Activated CD4-positive, alpha-beta T cell treated with anti-CD3 and anti-CD28 coated beads, Interleukin-2, amount 10 ng/mL, durations not matched to agents 7 days and 5 days (primary cell): ENCODE measurements at regions of chr2 and their contacts with region 1.

Region 1: DNA sequence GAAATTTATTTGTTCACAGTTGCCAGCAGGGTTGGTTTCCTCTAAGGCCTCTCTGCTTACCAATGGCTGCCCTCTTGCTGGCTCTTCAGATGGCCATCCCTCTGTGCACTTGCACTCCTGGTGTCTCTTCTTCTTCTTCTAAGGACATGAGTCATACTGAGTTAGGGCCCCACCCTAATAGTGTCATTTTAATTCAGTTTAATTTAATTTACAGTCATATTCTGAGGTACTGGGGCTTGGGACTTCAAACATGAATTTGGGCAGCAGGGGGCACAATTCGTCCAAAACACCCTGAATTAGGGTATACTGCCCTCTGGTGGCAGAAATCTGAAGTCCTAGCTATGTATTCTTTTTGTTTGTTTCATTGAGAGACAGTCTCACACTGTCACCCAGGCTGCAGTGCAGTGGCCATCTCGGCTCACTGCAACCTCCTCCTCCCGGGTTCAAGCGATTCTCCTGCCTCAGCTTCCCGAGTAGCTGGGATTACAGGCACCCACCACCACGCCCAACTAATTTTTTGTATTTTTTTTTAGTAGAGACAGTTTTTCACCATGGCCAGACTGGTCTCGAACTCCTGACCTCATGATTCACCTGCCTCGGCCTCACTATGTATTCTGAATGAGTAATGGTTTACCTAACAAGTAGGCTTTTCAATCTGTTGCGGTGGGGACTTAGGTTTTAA is 19.8 kb downstream of the SLC4A1AP start:
- DNase-seq: peak; percentile 96
- H3K4me3 Mint-ChIP-seq: no peak overlapping the region
- H3K27ac Mint-ChIP-seq: peak overlapping the region; percentile 82
- H3K4me1 Mint-ChIP-seq: peaks cover 26% of the 10 kb centered on the region
- H3K27me3 Mint-ChIP-seq: no peaks in the 10 kb centered on the region

Region 2: DNA sequence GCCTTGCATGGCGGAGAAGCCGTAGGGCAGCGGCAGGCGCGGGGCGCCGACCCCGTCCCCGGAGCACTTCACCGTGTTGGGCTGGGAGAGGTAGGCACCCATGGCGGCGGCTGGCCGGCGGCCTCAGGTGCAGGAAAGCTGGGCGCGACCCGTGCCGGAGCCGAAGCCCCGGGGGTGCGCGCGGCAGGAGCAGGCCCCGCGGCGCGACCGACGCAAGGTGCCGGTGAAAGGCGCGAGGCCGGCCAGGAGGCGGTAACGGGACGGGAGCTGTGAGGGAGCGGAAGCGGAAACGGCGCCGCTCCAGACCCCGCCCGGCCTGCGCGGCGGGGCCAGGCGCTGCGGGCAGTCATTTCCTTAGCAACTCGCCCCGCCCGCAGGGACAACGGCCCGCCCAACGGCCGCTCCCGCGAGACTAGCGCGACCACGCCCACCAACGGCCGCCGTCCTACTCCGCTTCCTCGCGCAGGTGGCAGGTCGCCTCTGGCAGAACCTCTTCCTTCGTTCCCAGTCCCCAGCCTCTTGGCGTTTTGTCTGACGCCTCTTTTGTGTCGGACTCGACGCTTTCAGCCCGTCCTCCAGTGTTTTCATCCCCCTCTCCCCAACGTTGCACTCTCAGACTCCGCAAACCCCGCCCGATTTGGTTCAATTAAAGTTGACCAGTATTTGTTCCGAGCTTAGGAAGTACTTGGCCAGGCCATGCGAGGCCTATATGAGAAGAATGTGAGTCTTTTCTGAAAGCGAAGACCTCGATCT is 274.0 kb before region 1 on chr2 and contains the start of gene PPM1G:
- CTCF ChIA-PET with region 1: interaction called, 11 read pairs
- POLR2A ChIA-PET with region 1: no interaction called
- DNase-seq: peak; percentile 96
- H3K4me3 Mint-ChIP-seq: peak within 1 kb of the TSS; percentile 82
- H3K27ac Mint-ChIP-seq: peak within 1 kb of the TSS; percentile 92
- H3K4me1 Mint-ChIP-seq: peaks cover 36% of the 10 kb centered on the region
- H3K27me3 Mint-ChIP-seq: peaks cover 6% of the 10 kb centered on the region
- total RNA-seq, gene PPM1G: 109 TPM

Region 3: GRCh38 chr2:27621517-27621916 is 62.0 kb before region 1 on chr2:
- CTCF ChIA-PET with region 1: interaction called, 11 read pairs
- POLR2A ChIA-PET with region 1: no interaction called
- DNase-seq: no peak
- H3K4me3 Mint-ChIP-seq: no peak overlapping the region
- H3K27ac Mint-ChIP-seq: no peak overlapping the region
- H3K4me1 Mint-ChIP-seq: no peaks in the 10 kb centered on the region
- H3K27me3 Mint-ChIP-seq: no peaks in the 10 kb centered on the region

Region 4: DNA sequence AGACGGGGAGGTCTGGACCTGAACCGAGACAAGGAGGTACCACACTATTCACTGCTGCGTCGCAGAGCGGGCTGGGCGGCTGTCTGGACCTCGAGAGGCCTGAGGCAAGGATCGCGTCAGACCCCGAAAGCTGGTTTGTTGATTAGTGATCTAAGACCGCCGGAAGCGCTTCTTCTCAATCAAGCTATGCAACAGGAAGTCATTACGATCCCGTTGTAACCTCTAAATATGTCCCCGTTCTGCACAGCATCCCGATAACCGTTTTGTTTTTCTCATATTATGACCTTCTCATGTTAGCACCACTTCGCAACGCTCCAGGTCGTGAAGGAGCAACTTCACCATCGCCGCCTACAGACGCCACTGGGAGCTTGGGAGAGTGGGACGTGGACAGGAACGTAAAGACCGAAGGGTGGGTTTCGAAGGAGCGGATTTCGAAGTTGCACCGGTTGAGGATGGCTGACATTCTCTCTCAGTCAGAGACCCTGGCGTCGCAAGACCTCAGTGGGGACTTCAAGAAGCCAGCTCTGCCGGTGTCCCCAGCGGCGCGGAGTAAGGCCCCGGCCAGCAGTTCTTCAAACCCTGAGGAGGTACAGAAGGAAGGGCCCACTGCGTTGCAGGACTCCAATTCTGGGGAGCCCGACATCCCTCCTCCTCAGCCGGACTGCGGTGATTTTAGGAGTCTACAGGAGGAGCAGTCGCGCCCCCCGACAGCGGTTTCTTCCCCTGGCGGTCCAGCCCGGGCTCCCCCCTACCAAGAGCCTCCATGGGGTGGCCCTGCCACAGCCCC is 19.9 kb before region 1 on chr2 and contains the starts of genes SLC4A1AP and SUPT7L:
- CTCF ChIA-PET with region 1: interaction called, 56 read pairs
- POLR2A ChIA-PET with region 1: no interaction called
- DNase-seq: peak; percentile 78
- H3K4me3 Mint-ChIP-seq: peak within 1 kb of the TSS; percentile 100
- H3K27ac Mint-ChIP-seq: peak within 1 kb of the TSS; percentile 100
- H3K4me1 Mint-ChIP-seq: peaks cover 47% of the 10 kb centered on the region
- H3K27me3 Mint-ChIP-seq: no peaks in the 10 kb centered on the region
- total RNA-seq, gene SLC4A1AP: 22.7 to 23.5 TPM
- total RNA-seq, gene SUPT7L: 34.5 to 36.2 TPM

Region 5: DNA sequence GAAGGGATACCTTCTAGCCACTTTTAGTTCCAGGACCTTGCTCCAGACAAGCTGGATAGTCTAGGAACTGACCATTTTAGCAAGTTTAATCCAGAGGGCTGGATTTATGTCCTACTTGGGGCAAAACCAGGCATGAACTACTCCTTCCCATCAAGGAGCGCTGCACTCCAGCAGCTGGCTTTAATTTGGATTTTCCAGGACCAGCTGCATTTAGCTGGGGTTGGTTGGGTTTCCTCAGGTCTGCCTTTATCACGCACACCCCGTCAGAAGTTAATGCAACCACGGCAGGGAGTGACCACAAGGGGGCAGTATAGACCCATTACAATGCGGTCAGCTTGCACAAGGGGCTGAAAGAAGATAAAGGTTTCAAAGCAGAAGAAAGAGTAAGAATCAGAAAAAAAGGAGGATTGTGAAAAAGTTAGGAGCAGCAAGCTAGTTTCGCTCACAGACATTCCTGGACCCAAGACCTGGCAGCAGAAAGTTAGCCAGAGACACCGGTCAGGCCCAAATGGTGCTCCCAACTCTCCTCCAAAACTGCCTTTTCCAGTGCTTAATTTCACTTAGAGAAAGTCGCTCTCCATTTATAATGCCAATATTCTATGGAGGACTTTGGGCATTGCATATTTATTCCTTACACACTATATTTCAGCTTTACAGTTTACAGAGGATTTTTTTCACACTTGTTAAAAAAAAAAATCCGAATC is 20.3 kb after region 1 on chr2:
- CTCF ChIA-PET with region 1: interaction called, 21 read pairs
- POLR2A ChIA-PET with region 1: no interaction called
- DNase-seq: peak; percentile 89
- H3K4me3 Mint-ChIP-seq: no peak overlapping the region
- H3K27ac Mint-ChIP-seq: peak overlapping the region; percentile 2
- H3K4me1 Mint-ChIP-seq: peaks cover 11% of the 10 kb centered on the region
- H3K27me3 Mint-ChIP-seq: no peaks in the 10 kb centered on the region

Region 6: DNA sequence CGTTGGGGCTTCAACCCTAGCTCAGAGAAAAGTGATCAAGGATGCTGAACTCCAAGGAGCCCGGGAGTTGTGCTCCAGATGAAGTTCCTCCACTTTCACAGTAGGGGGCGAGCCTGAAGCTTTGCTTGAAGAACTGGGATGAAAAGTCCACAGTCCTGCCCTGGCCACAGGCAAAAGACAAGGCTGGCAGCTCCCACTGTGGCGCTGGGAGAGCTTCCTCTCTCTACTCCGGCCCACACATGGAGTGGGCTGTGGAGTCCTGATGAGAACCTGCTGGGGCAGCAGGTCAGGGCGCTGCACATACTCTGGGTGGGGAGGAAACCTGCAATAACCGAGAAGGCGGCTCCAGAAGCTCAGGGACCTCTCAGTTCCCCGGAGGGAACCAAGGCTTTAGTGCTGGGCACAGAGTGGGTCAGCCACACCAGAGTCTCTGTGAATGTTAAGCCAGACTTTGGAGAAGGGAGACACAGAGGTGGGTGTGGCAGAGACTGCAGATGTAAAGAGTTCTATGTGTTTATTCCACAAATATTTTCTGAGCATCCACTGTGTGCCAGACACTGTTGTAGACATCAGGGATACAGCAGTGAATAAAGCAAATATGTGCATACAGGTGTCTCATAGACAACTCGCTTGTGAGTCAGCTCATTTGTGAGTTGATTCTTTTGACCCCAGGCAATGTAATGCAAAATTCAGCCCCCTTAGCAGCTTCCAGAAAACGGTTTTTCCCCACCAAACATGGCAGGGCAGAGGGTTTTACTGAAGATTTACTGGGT is 40.0 kb after region 1 on chr2:
- CTCF ChIA-PET with region 1: interaction called, 14 read pairs
- POLR2A ChIA-PET with region 1: no interaction called
- DNase-seq: peak; percentile 34
- H3K4me3 Mint-ChIP-seq: no peak overlapping the region
- H3K27ac Mint-ChIP-seq: no peak overlapping the region
- H3K4me1 Mint-ChIP-seq: peaks cover 29% of the 10 kb centered on the region
- H3K27me3 Mint-ChIP-seq: no peaks in the 10 kb centered on the region